A549 (cell line): ENCODE measurements at regions of chr18 and their contacts with region 1.

Region 1: DNA sequence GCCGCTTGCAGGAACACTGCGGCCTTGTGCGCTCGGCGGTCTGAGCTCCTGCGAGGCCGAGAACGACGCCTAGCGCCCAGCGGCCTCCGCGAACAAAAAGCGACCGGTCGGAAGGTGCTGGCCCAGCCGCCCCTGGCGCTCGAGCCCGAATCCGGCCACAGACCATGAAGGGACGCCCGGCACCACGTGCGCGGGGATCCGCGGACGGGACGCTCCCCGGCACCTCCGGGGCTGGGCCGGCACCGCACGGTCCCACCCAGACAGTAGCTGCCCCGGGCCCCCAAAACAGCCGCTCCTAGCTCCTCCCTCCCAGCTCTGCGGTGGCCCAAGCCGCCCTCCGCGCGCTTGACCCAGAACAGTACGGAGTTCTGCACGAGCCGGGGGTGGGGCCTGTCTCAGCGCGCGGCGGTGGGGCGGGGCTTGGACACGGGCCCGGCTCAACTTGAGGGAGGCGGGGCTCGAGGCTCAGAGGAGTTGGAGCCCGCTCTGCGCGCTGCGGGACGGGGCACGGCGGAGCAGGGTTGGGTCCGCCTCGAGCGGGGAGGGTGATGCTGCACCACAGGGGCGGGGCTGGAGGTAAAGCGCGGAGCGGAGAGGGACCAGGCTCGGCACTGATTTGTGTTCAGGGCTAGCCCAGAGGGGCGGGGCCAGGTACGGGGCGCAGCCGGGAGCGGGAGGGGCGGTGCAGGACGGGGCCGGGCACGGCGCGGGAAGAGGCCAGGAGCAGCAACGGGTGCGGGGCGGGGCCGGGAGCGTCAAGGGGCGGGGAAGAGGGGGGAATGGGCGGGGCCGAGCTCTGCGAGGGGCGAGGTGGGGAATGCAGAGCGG is 538 bp upstream of the IMPA2 start:
- DNase-seq: peak; percentile 87 to 98
- ATAC-seq: peak; percentile 87 to 95
- H3K4me3 ChIP-seq: peak overlapping the region; percentile 55
- H3K27ac ChIP-seq: peak overlapping the region; percentile 97 to 99
- H3K4me1 ChIP-seq: peaks cover 36% of the 10 kb centered on the region
- CTCF ChIP-seq: no peak
- EP300 ChIP-seq: no peak
- POLR2A ChIP-seq: peak; percentile 67
- RAD21 ChIP-seq: no peak

Region 2: DNA sequence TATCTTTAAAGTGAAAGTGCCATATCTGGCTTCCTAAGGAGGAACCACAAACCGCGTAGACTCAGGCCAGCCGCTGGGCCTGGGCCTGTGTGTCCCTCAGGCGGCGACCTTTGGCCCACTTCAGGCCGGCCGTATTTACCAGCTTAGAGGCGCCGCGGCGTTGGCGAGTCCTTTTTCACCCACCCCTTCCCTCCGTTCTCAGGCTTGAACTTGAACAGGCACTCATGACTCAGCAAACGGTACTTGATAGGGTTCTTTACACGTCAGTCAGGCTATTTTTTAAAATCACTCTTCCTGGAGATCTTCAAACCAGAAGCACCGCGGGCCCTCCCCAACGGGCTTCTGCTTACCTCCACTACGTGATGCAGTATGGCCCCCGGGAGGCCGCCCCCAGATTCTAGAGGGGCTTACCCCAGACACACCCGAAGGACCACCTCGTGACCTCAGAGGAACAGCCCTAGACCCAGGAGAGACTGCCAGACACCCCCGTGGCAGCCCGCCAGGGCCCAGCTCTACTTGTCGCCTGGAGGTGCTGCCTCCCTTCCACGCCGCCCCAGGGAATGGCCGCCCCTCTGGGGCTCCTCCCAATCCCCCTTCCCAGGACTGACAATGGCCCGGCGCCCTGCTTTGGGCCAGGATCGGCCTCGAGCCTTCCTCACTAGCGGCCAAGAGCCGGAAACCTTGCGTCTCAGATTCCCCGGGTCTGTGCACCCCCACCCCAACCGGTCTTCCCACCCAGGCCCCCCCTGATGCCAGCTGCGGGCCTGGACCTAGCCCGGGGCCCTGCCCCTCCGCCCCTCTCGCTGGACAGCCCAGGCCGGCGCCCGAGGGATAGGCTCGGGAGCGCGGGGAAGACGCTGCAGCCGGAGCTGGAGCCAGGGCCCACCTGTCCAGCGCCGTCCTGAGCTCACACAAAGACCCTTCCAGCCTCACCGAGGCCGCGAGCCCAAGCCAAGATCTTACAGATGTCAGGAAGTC is 33.3 kb before region 1 on chr18:
- CTCF ChIA-PET with region 1: interaction called, 5 read pairs
- POLR2A ChIA-PET with region 1: interaction called, 50 read pairs
- DNase-seq: peak in 1 of 2 experiments; percentile 98
- ATAC-seq: peak; percentile 91
- H3K4me3 ChIP-seq: peak overlapping the region; percentile 49
- H3K27ac ChIP-seq: peak overlapping the region; percentile 98 to 100
- H3K4me1 ChIP-seq: peaks cover 35% of the 10 kb centered on the region
- CTCF ChIP-seq: no peak
- EP300 ChIP-seq: no peak
- POLR2A ChIP-seq: no peak; the same call in 1 of the 2 replicates
- RAD21 ChIP-seq: peak in 1 of 2 experiments; percentile 1; a peak in 1 of 5 replicates